IMR-90 (cell line): ENCODE measurements at regions of chr14 and their contacts with region 1.

Region 1: DNA sequence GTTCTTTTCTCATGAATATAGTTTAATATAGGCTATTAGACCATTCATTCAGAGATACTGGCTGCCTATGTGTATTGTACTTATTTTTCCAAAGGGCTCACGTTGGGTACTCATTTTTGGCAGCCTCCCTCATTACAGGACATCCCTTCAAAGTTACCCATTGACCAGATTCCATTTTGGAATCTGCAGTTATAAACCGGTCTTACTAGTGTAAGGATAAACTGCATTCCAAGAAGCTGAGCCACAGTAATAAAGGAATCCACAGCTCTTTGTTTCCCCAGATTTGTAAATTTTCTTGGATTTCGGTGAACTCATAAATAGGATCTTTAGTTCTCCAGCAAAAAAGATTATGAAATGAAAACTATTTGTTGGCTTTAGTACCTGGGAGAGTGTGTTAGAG is 18.8 kb upstream of the CFL2 start:
- DNase-seq: peak; percentile 67
- ATAC-seq: peak; percentile 91
- H3K4me3 ChIP-seq: no peak overlapping the region
- H3K27ac ChIP-seq: no peak overlapping the region
- H3K4me1 ChIP-seq: peaks cover 5% of the 10 kb centered on the region; the same call in 1 of the 2 replicates
- H3K27me3 ChIP-seq: no peaks in the 10 kb centered on the region
- CTCF ChIP-seq: no peak
- POLR2A ChIP-seq: no peak
- RAD21 ChIP-seq: no peak

Region 2: DNA sequence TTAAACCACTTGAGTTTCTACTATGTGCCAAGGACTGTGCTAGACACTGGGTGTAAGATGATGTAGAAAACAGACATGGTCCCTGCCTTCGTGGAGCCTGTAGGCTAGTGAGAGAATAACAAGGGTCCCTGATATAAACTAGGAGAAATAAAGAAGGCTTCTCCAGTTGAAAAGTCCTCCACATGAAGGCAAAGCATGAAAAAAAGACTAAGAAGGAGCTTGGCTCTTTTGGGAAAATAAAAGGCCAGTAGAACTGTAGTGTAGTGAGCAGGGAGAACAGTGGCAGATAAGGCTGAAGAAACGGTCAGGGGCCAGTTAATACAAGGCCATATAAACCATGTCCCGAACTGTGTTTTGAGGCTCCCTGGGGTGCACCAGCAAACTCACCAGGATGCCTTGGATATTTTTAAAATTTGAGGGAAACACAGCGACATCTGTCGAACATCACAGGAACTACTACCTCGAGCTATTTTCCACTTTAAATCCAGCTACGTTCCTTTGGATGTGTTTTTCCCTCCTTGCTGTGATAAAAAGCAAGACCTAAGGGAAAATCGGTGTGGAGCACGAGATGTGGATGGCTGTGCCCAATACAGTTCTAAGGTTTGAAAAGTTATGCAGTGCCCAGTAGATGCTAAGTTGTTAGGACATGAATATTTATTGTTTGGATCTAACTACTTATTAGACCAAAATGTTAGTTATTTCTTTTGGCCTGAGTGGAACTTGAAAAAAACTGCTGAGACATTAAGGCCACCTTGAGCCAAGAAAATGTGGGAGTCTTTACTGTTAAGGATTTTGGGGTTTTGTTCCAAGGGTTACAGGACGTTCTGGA is 10.3 kb before region 1 on chr14:
- CTCF ChIA-PET with region 1: interaction called, 14 read pairs
- POLR2A ChIA-PET with region 1: no interaction called
- dilution Hi-C with region 1: no loop called
- in situ Hi-C with region 1: no loop called
- intact Hi-C with region 1: no loop called
- DNase-seq: peak; percentile 60
- ATAC-seq: peak; percentile 89
- H3K4me3 ChIP-seq: no peak overlapping the region
- H3K27ac ChIP-seq: no peak overlapping the region
- H3K4me1 ChIP-seq: peaks cover 2% of the 10 kb centered on the region; the same call in 1 of the 2 replicates
- H3K27me3 ChIP-seq: no peaks in the 10 kb centered on the region
- CTCF ChIP-seq: peak; percentile 73
- POLR2A ChIP-seq: no peak
- RAD21 ChIP-seq: peak; percentile 70

Region 3: DNA sequence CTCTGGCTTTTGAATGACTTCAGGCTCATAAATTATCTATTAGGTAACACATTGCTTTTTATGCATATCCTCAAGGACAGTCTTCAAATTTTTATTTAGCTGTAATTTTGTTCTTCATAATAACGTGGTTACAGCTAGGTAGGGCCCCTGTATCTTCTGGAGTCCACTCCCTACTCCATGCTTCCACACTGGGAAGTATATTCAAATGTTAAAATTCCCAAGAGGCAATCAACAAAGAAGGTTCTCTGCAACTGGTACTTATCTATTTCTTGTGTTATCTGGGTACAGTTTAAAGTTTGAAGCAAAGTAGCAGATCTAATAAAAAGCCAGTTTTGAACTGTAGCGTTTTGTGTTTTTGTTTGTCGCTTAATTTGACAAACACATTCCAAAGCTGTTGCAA is 162.0 kb after region 1 on chr14:
- CTCF ChIA-PET with region 1: no interaction called
- POLR2A ChIA-PET with region 1: no interaction called
- dilution Hi-C with region 1: no loop called
- in situ Hi-C with region 1: no loop called
- intact Hi-C with region 1: no loop called
- DNase-seq: no peak
- ATAC-seq: no peak
- H3K4me3 ChIP-seq: no peak overlapping the region
- H3K27ac ChIP-seq: no peak overlapping the region
- H3K4me1 ChIP-seq: no peaks in the 10 kb centered on the region
- H3K27me3 ChIP-seq: no peaks in the 10 kb centered on the region
- CTCF ChIP-seq: no peak
- POLR2A ChIP-seq: no peak
- RAD21 ChIP-seq: no peak

Region 4: DNA sequence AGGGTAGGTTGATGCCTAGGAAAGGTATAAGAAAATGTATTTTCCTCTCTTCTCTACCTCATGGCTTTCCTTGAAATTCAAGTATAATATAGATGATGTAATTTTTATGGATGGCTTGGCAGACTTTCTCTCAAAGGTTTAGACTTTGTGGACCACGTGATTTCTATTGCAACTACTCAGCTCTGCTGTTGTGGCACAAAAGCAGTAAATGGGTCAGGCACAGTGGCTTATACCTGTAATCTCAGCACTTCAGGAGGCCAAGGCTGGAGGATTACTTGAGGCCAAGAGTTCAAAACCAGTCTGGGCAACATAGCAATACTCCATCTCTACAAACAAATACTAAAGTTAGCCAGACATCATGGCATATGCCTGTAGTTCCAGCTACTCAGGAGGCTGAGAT is 271.6 kb after region 1 on chr14:
- CTCF ChIA-PET with region 1: no interaction called
- POLR2A ChIA-PET with region 1: no interaction called
- dilution Hi-C with region 1: no loop called
- in situ Hi-C with region 1: no loop called
- intact Hi-C with region 1: no loop called
- DNase-seq: no peak
- ATAC-seq: no peak
- H3K4me3 ChIP-seq: no peak overlapping the region
- H3K27ac ChIP-seq: no peak overlapping the region
- H3K4me1 ChIP-seq: no peaks in the 10 kb centered on the region
- H3K27me3 ChIP-seq: no peaks in the 10 kb centered on the region
- CTCF ChIP-seq: no peak
- POLR2A ChIP-seq: no peak
- RAD21 ChIP-seq: no peak